PC-3 (cell line): ENCODE measurements at regions of chr4 and their contacts with region 1.

Region 1: GRCh38 chr4:70839589-70840093 is at the start of gene GRSF1:
- DNase-seq: peak; percentile 94
- ATAC-seq: peak; percentile 83
- H3K4me3 ChIP-seq: peak within 1 kb of the TSS; percentile 96
- H3K27ac ChIP-seq: peak within 1 kb of the TSS; percentile 39
- H3K4me1 ChIP-seq: peaks cover 9% of the 10 kb centered on the region
- H3K27me3 ChIP-seq: no peaks in the 10 kb centered on the region
- CTCF ChIP-seq: no peak
- total RNA-seq, gene GRSF1: 102 and 103 TPM in 2 replicates

Region 2: DNA sequence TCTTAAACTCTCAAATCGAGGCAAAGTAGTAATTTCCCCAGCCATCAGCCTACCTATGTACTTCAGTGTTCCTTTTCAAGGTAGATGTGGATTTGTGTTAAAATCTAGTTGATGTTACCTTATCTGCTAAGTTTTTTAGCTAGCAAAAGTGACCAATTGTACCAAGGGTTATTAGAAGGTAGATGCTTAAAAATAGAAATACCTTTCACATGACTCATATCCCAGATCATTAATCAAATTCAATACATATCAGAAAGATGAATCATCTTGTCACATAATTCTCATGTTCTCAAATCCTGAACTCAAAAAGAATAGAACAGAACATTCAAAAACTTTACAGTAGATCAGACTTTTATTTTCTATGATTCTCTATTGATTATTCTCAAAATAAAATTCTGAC is 207.6 kb before region 1 on chr4:
- CTCF ChIA-PET with region 1: no interaction called
- POLR2A ChIA-PET with region 1: interaction called, 25 read pairs
- intact Hi-C with region 1: no loop called
- DNase-seq: peak; percentile 95
- ATAC-seq: peak; percentile 58
- H3K4me3 ChIP-seq: no peak overlapping the region
- H3K27ac ChIP-seq: no peak overlapping the region
- H3K4me1 ChIP-seq: peaks cover 16% of the 10 kb centered on the region
- H3K27me3 ChIP-seq: no peaks in the 10 kb centered on the region
- CTCF ChIP-seq: no peak

Region 3: GRCh38 chr4:70642366-70642765 is 197.3 kb before region 1 on chr4:
- CTCF ChIA-PET with region 1: no interaction called
- POLR2A ChIA-PET with region 1: no interaction called
- intact Hi-C with region 1: no loop called
- DNase-seq: no peak
- ATAC-seq: no peak
- H3K4me3 ChIP-seq: no peak overlapping the region
- H3K27ac ChIP-seq: no peak overlapping the region
- H3K4me1 ChIP-seq: no peaks in the 10 kb centered on the region
- H3K27me3 ChIP-seq: no peaks in the 10 kb centered on the region
- CTCF ChIP-seq: no peak

Region 4: GRCh38 chr4:70704331-70705145 is 135.1 kb before region 1 on chr4:
- CTCF ChIA-PET with region 1: interaction called, 11 read pairs
- POLR2A ChIA-PET with region 1: interaction called, 3 read pairs
- intact Hi-C with region 1: loop called (anchors 2 kb)
- DNase-seq: peak; percentile 81
- ATAC-seq: peak; percentile 50
- H3K4me3 ChIP-seq: peak overlapping the region; percentile 83
- H3K27ac ChIP-seq: peak overlapping the region; percentile 78
- H3K4me1 ChIP-seq: peaks cover 26% of the 10 kb centered on the region
- H3K27me3 ChIP-seq: no peaks in the 10 kb centered on the region
- CTCF ChIP-seq: peak; percentile 52

Region 5: DNA sequence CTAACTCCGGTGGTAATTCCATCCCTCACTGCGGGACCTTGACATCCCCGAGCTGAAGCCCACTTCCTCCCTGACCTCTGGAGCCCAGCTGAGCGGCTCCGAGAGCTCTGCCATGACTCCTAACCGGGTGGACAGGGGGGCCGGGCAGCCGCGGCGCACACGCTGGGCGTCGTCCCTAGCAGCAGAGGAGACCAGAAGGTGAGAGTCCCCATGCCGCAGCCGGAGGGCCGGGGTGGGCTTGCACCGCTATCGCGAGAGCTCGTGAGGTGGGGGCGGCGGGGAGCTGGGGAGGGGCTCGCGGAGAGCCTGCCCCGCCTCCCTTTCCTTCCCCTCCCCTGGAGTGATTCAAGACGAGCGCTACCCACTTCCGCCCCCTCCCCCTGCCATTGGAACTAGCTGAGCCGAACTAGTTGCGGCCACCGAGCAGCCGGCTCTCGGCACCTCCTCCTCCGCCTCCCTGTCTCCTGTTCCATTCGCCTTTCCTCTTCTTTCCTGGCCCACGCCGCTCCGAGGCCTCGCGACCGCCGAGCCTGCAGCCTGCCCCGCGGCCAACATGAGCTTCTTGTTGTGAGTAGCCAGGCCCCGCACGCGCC is 62.4 kb after region 1 on chr4 and contains the start of gene MOB1B:
- CTCF ChIA-PET with region 1: interaction called, 3 read pairs
- POLR2A ChIA-PET with region 1: no interaction called
- intact Hi-C with region 1: loop called (anchors 5 kb)
- DNase-seq: peak; percentile 87
- ATAC-seq: peak; percentile 89
- H3K4me3 ChIP-seq: peak within 1 kb of the TSS; percentile 87
- H3K27ac ChIP-seq: no peak within 1 kb of the TSS
- H3K4me1 ChIP-seq: peaks cover 11% of the 10 kb centered on the region
- H3K27me3 ChIP-seq: no peaks in the 10 kb centered on the region
- CTCF ChIP-seq: no peak
- total RNA-seq, gene MOB1B: 11.4 and 12.6 TPM in 2 replicates

Region 6: GRCh38 chr4:70943114-70943513 is 103.5 kb after region 1 on chr4:
- CTCF ChIA-PET with region 1: no interaction called
- POLR2A ChIA-PET with region 1: no interaction called
- intact Hi-C with region 1: no loop called
- DNase-seq: no peak
- ATAC-seq: no peak
- H3K4me3 ChIP-seq: no peak overlapping the region
- H3K27ac ChIP-seq: no peak overlapping the region
- H3K4me1 ChIP-seq: no peaks in the 10 kb centered on the region; the same call in 1 of the 2 replicates
- H3K27me3 ChIP-seq: no peaks in the 10 kb centered on the region
- CTCF ChIP-seq: no peak

Region 7: DNA sequence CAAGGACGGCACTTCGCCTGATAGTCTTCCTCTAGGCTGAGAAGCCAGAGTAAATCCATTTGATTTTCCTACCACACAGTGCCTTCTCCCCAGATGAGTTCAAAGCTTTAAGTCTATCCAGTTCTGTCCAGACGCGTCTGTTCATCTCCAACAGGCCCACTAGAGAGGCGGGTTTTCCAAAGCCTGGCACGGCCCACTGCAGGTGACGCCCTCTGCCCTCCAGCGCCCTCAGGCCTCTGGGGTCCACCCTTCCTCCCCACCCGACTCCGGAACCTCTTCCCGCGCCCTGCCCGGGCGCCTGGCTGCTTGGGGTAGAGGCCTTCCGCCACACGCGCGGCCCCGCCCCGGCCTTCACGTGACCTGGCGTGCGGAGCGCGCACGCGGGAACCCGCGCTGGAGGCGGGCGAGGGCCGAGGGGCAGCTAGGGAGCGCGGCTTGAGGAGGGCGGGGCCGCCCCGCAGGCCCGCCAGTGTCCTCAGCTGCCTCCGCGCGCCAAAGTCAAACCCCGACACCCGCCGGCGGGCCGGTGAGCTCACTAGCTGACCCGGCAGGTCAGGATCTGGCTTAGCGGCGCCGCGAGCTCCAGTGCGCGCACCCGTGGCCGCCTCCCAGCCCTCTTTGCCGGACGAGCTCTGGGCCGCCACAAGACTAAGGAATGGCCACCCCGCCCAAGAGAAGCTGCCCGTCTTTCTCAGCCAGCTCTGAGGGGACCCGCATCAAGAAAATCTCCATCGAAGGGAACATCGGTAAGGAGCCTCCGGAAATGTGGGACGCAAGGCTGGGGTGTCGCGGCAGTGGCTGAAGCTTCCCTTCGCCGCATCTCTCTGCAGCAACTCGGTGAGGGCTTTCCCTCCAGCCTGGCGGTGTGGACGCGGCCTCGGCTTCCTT is 153.8 kb after region 1 on chr4 and contains the start of gene DCK:
- CTCF ChIA-PET with region 1: no interaction called
- POLR2A ChIA-PET with region 1: interaction called, 7 read pairs
- intact Hi-C with region 1: loop called (anchors 2 kb)
- DNase-seq: peak; percentile 95
- ATAC-seq: peak; percentile 87
- H3K4me3 ChIP-seq: peak within 1 kb of the TSS; percentile 75
- H3K27ac ChIP-seq: peak within 1 kb of the TSS; percentile 29
- H3K4me1 ChIP-seq: peaks cover 31% of the 10 kb centered on the region
- H3K27me3 ChIP-seq: no peaks in the 10 kb centered on the region
- CTCF ChIP-seq: no peak
- total RNA-seq, gene DCK: 19.5 and 21.0 TPM in 2 replicates